ENCODE measurements at regions of chr10 and their contacts with region 1.

Region 1: DNA sequence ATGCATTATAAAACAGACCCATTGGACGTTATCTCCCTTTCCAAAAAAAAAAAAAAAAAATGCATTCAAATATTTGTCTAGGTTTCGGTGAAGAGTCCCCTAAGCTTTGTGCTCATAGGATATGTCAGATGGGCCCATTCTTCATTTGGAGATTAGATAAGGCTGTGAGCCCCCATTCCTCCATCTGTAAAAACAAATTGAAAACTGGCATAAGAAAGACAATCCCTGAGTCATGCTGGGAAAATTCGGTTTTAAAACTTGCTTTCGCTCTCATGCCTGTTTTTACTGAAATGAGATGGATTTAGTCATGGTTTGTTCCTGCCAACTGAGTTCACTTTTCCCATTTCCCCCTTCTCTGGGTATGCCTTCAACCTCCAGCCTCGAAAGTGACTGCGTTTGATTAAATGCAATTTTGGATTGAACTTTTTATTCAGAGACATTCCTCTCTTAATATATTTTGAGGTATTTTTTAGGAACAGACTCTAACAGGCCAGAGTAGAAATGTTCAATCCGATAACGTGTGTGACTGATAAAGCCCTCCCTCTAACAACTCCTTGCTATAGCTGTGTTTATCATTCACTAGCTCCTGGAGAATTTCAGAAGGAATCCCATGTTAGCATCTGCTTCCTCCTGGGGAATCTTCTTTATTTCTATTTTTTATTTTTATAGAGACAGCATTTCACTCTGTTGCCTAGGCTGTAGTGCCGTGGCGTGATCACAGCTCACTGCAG is 190.9 kb upstream of the LYZL2 start:
- DNase-seq: no peak
- ATAC-seq: no peak
- H3K4me3 ChIP-seq: no peak overlapping the region
- H3K27ac ChIP-seq: no peak overlapping the region
- H3K4me1 ChIP-seq: no peaks in the 10 kb centered on the region
- H3K27me3 ChIP-seq: no peaks in the 10 kb centered on the region
- CTCF ChIP-seq: no peak

Region 2: GRCh38 chr10:30502266-30503060 is 318.0 kb before region 1 on chr10:
- CTCF ChIA-PET with region 1: no interaction called
- POLR2A ChIA-PET with region 1: no interaction called
- in situ Hi-C with region 1: no loop called
- intact Hi-C with region 1: no loop called
- DNase-seq: no peak
- ATAC-seq: no peak
- H3K4me3 ChIP-seq: no peak overlapping the region
- H3K27ac ChIP-seq: no peak overlapping the region
- H3K4me1 ChIP-seq: peaks cover 2% of the 10 kb centered on the region; the same call in 1 of the 2 replicates
- H3K27me3 ChIP-seq: no peaks in the 10 kb centered on the region; the same call in 1 of the 2 replicates
- CTCF ChIP-seq: no peak

Region 3: DNA sequence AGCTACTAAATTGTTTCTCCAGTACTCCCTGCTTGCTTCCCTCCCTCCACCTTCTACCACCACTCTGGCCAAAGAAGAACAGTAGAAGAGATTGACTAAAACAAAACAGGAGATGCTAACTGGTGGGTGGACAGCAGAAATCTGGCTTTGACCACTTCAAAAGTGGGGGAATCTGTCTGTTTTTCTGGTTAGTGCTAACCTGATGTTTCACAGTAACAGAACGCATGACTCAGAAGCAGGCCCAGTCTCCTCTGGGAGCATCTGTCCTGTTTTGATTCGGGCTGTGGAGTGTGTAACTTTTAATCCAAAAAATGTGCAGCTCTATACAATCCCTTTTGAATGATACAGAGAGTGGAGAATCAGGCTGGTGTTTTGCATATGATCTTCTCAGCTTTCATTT is 243.9 kb after region 1 on chr10:
- CTCF ChIA-PET with region 1: no interaction called
- POLR2A ChIA-PET with region 1: no interaction called
- in situ Hi-C with region 1: no loop called
- intact Hi-C with region 1: loop called (anchors 5 kb)
- DNase-seq: no peak
- ATAC-seq: no peak
- H3K4me3 ChIP-seq: no peak overlapping the region
- H3K27ac ChIP-seq: no peak overlapping the region
- H3K4me1 ChIP-seq: no peaks in the 10 kb centered on the region
- H3K27me3 ChIP-seq: peaks cover 2% of the 10 kb centered on the region; the same call in 1 of the 2 replicates
- CTCF ChIP-seq: no peak